ENCODE measurements at regions of chr2 and their contacts with region 1.

Region 1: DNA sequence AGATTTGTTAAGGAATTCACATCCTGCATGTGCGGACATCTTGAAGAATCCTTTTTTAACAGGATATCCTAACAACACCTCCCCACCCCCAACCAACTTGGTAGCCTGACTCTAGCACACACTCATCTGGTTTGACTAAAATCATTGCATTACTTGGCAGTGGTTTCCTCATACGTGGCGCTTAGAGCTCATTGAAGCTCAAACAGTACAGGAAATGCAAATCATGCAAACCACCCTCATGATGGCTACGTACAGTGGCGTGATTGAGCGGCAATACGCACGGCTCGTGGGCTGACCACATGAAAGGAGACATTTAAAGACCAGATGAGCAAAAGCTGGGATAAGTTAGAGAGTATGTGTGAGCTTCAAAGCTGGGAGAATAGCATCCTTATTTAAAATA is 336.2 kb downstream of the ZEB2 start:
- DNase-seq: no peak
- H3K4me3 ChIP-seq: no peak overlapping the region
- H3K27ac ChIP-seq: no peak overlapping the region
- H3K4me1 ChIP-seq: no peaks in the 10 kb centered on the region
- H3K27me3 ChIP-seq: no peaks in the 10 kb centered on the region
- CTCF ChIP-seq: no peak

Region 2: DNA sequence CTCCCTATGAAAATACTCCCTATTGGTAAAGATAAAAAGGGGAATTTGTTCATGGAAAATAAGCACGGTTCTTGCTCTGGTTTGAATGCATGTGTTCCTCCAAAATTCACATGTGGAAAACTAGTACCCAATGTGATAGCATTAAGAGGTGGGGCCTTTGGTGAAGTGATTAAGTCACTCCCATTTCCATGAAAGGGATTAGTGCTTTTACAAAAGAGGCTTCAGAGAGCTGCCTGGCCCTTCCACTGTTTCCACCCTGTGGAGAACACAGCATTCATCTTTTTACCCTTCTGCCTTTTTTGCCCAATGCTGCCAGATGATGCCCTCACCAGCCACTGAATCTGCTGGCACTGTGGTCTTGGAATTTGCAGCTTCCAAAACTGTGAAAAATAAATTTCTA is 387.7 kb before region 1 on chr2:
- CTCF ChIA-PET with region 1: no interaction called
- dilution Hi-C with region 1: no loop called
- in situ Hi-C with region 1: no loop called
- intact Hi-C with region 1: no loop called
- DNase-seq: no peak
- H3K4me3 ChIP-seq: no peak overlapping the region
- H3K27ac ChIP-seq: no peak overlapping the region
- H3K4me1 ChIP-seq: no peaks in the 10 kb centered on the region
- H3K27me3 ChIP-seq: peaks cover 2% of the 10 kb centered on the region
- CTCF ChIP-seq: no peak

Region 3: GRCh38 chr2:144237108-144237507 is 53.4 kb after region 1 on chr2:
- CTCF ChIA-PET with region 1: interaction called, 14 read pairs
- dilution Hi-C with region 1: no loop called
- in situ Hi-C with region 1: no loop called
- intact Hi-C with region 1: no loop called
- DNase-seq: no peak
- H3K4me3 ChIP-seq: no peak overlapping the region
- H3K27ac ChIP-seq: no peak overlapping the region
- H3K4me1 ChIP-seq: no peaks in the 10 kb centered on the region
- H3K27me3 ChIP-seq: no peaks in the 10 kb centered on the region
- CTCF ChIP-seq: no peak

Region 4: GRCh38 chr2:144274131-144274530 is 90.4 kb after region 1 on chr2:
- CTCF ChIA-PET with region 1: no interaction called
- dilution Hi-C with region 1: no loop called
- in situ Hi-C with region 1: no loop called
- intact Hi-C with region 1: no loop called
- DNase-seq: no peak
- H3K4me3 ChIP-seq: no peak overlapping the region
- H3K27ac ChIP-seq: no peak overlapping the region
- H3K4me1 ChIP-seq: no peaks in the 10 kb centered on the region
- H3K27me3 ChIP-seq: no peaks in the 10 kb centered on the region
- CTCF ChIP-seq: no peak